ENCODE measurements at regions of chr15 and their contacts with region 1.

Region 1: GRCh38 chr15:38474155-38474757 is 20.3 kb downstream of the FAM98B start:
- DNase-seq: peak; percentile 57 to 73 (median 69)
- H3K4me3 ChIP-seq: no peak overlapping the region
- H3K4me3 Mint-ChIP-seq: peak overlapping the region in 1 of 8 donors; percentile 2
- H3K27ac ChIP-seq: peak overlapping the region; percentile 25
- H3K27ac Mint-ChIP-seq: peak overlapping the region; percentile 59 to 86 (median 81)
- H3K4me1 ChIP-seq: peaks cover 5% of the 10 kb centered on the region
- H3K4me1 Mint-ChIP-seq: peaks cover 8 to 9% (median 8%) of the 10 kb centered on the region in 4 donors
- H3K27me3 ChIP-seq: no peaks in the 10 kb centered on the region
- H3K27me3 Mint-ChIP-seq: no peaks in the 10 kb centered on the region

Region 2: DNA sequence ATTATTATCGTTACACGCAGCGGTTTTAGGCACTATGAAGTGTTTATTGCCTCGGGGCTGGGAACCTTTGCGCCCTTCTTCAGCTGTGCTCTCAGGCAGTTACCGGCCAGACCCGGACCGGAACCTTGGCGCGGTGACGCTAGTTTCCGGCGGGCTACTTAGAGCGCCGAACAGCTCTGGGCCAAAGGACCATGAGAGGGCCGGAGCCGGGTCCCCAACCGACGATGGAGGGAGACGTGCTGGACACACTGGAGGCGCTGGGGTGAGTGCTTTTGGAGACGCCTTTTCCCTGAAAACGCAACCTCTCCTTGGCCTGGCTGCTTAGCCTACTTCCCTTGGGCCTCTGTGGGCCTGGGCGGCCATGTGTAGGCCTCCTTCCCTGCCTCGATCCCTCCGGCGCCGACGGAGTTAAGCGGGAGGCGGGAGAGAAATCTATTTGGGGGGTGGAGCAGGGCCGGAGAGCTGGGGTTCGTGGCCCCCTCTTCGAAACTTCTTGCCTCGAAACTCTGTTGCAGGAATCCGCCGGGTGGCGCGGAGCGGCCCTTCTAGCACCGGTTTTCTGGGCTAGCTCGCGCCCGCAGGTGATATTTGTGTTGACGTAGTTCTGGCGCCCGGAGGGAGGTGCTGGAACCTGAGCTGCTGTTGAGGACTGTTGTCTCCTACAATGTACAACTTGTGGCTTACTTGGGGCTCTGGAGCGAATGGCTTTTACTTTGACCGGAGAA is 20.1 kb before region 1 on chr15 and contains the start of gene FAM98B:
- CTCF ChIA-PET with region 1: interaction called, 14 read pairs
- POLR2A ChIA-PET with region 1: interaction called, 8 read pairs
- intact Hi-C with region 1: loop called (anchors 1 kb)
- DNase-seq: peak; percentile 80 to 88 (median 84)
- H3K4me3 ChIP-seq: peak within 1 kb of the TSS; percentile 88 to 95
- H3K4me3 Mint-ChIP-seq: peak within 1 kb of the TSS; percentile 95 to 99 (median 97)
- H3K27ac ChIP-seq: peak within 1 kb of the TSS; percentile 74
- H3K27ac Mint-ChIP-seq: peak within 1 kb of the TSS; percentile 94 to 98 (median 96)
- H3K4me1 ChIP-seq: peaks cover 23% of the 10 kb centered on the region
- H3K4me1 Mint-ChIP-seq: peaks cover 26 to 39% (median 32%) of the 10 kb centered on the region in 4 donors
- H3K27me3 ChIP-seq: no peaks in the 10 kb centered on the region
- H3K27me3 Mint-ChIP-seq: no peaks in the 10 kb centered on the region
- total RNA-seq, gene FAM98B: 22.0 to 26.3 TPM

Region 3: DNA sequence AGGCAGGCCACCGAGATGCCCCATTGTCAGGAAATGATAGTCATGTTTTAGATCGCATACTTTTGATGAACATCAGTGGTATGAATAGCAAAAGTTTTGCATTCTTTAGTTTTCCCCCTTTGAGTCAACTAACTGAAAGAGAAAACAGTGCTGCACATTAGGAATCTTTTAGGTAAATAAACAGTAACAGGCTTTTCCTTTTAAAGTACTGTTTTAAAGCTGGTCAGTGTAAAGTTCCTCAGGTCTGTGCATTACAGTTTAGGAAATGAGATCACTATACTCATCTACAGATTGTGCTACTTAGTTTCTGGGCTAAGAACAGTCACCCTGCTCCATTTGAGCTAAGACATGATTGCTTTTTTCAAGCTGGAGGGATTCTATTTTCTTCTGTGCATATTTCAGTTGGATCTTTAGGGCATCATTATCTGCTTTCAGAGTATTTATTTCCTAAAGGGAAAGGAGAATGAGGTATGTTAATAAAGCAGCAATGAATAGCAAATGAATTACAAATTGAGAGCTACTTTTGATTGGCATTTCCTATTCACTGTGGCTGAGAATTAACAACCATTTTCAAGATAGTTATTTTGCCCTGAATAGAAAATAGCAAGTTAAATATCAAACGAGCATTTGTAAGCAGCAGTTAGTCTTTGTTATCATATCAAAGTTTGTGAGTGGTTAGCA is 16.1 kb after region 1 on chr15:
- CTCF ChIA-PET with region 1: interaction called, 10 read pairs
- POLR2A ChIA-PET with region 1: interaction called, 4 read pairs
- intact Hi-C with region 1: no loop called
- DNase-seq: no peak
- H3K4me3 ChIP-seq: no peak overlapping the region
- H3K4me3 Mint-ChIP-seq: peak overlapping the region in 1 of 8 donors; percentile 2
- H3K27ac ChIP-seq: no peak overlapping the region
- H3K27ac Mint-ChIP-seq: peak overlapping the region; percentile 8 to 92 (median 64)
- H3K4me1 ChIP-seq: peaks cover 29% of the 10 kb centered on the region
- H3K4me1 Mint-ChIP-seq: peaks cover 28 to 34% (median 33%) of the 10 kb centered on the region in 4 donors
- H3K27me3 ChIP-seq: no peaks in the 10 kb centered on the region
- H3K27me3 Mint-ChIP-seq: no peaks in the 10 kb centered on the region

Region 4: GRCh38 chr15:38817427-38818156 is 343.3 kb after region 1 on chr15:
- CTCF ChIA-PET with region 1: no interaction called
- POLR2A ChIA-PET with region 1: no interaction called
- intact Hi-C with region 1: loop called (anchors 1 kb)
- DNase-seq: peak; percentile 69 to 78 (median 73)
- H3K4me3 ChIP-seq: no peak overlapping the region
- H3K4me3 Mint-ChIP-seq: peak overlapping the region in 4 of 8 donors; percentile 17 to 52 (median 20)
- H3K27ac ChIP-seq: no peak overlapping the region
- H3K27ac Mint-ChIP-seq: no peak overlapping the region
- H3K4me1 ChIP-seq: no peaks in the 10 kb centered on the region
- H3K4me1 Mint-ChIP-seq: peaks cover 0 to 5% (median 2%) of the 10 kb centered on the region in 4 donors
- H3K27me3 ChIP-seq: no peaks in the 10 kb centered on the region
- H3K27me3 Mint-ChIP-seq: peaks cover 0 to 2% of the 10 kb centered on the region in 2 donors